Activated CD8-positive, alpha-beta T cell treated with anti-CD3 and anti-CD28 coated beads, Interleukin-2, amount 10 ng/mL, durations not matched to agents 7 days and 5 days (primary cell): ENCODE measurements at regions of chr4 and their contacts with region 1.

Region 1: DNA sequence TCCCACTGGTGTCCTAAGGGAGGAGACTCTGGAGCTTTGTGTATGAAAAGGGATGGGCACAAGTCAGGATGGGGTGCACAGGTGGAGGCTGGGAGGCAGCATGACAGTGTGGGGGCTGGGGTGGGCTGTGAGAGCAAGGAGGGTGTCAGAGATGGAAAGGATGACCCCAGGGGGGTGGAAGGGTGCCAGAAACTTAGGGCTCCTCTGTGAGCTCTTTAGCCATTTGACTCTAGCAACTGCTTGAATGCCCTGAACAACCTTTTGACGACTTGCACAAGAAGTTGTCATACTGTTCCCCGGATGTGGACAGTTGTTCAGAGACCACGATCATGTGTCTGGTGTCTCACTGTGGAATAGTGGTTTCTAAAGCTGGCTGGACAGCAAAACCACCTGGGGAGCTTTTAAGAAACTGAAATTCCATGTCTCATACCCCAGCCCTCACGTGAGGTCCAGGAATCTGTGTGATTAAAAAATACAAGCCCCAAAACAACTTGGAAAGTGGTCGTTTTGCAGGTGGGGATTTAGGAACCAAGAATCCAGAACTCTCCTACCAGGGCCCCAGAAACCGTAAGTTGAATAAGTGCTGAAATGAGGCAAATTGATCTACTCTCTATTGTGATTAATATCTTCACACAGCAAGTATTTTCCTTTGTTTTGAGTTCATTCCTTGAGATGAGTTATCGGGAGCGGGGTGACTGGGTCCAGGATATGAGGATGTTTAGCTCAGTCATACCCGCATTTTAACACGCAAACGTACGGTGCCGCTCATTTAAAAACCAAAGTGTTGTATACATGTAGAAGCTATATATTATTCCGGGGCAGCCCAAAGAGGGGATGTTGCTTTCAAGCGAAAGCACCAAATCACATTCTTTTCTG is 3.4 kb downstream of the RHOH start:
- DNase-seq: peak; percentile 90
- ATAC-seq: peak; percentile 45
- H3K4me3 Mint-ChIP-seq: peak overlapping the region; percentile 93
- H3K27ac Mint-ChIP-seq: peak overlapping the region; percentile 96
- H3K4me1 Mint-ChIP-seq: peaks cover 37% of the 10 kb centered on the region
- H3K27me3 Mint-ChIP-seq: no peaks in the 10 kb centered on the region

Region 2: DNA sequence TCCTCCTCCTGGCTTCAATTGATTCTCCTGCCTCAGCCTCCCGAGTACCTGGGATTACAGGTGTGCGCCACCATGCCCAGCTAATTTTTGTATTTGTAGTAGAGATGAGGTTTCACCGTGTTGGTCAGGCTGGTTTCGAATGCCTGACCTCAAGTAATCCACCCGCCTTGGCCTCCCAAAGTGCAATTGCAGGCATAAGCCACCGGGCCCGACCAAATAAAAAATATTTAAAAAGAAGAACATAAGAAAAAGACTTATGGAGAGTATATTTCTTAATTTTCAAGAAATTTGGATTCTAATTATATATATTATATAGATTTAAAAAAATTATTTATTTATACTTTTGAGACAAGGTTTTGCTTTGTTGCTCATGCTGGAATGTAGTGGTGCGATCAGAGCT is 113.8 kb before region 1 on chr4:
- CTCF ChIA-PET with region 1: no interaction called
- POLR2A ChIA-PET with region 1: no interaction called
- DNase-seq: no peak
- ATAC-seq: no peak
- H3K4me3 Mint-ChIP-seq: no peak overlapping the region
- H3K27ac Mint-ChIP-seq: no peak overlapping the region
- H3K4me1 Mint-ChIP-seq: peaks cover 2% of the 10 kb centered on the region
- H3K27me3 Mint-ChIP-seq: no peaks in the 10 kb centered on the region

Region 3: DNA sequence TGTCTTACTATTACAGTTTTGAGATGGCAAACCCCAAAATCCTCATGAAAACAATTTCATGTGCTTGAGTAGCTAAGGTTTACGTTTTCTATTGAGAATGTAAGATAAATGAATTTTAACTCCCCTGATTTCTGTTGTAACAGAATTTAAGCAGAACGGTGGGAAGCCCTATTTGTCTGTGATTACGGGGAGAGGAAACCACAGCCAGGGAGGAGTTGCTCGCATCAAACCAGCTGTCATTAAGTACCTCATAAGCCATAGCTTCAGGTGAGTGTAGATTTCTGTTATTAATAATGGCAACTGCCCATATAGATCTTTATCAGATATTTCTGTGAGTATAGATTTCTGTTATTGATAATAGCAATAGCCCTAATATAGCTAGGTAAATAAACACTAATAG is 47.6 kb before region 1 on chr4:
- CTCF ChIA-PET with region 1: interaction called, 5 read pairs
- POLR2A ChIA-PET with region 1: interaction called, 20 read pairs
- DNase-seq: no peak
- ATAC-seq: peak; percentile 48
- H3K4me3 Mint-ChIP-seq: peak overlapping the region; percentile 10
- H3K27ac Mint-ChIP-seq: no peak overlapping the region
- H3K4me1 Mint-ChIP-seq: peaks cover 28% of the 10 kb centered on the region
- H3K27me3 Mint-ChIP-seq: no peaks in the 10 kb centered on the region

Region 4: GRCh38 chr4:40212674-40213527 is 12.7 kb after region 1 on chr4:
- CTCF ChIA-PET with region 1: interaction called, 12 read pairs
- POLR2A ChIA-PET with region 1: interaction called, 517 read pairs
- DNase-seq: peak; percentile 33
- ATAC-seq: peak; percentile 25
- H3K4me3 Mint-ChIP-seq: peak overlapping the region; percentile 68
- H3K27ac Mint-ChIP-seq: peak overlapping the region; percentile 86
- H3K4me1 Mint-ChIP-seq: peaks cover 90% of the 10 kb centered on the region
- H3K27me3 Mint-ChIP-seq: no peaks in the 10 kb centered on the region

Region 5: GRCh38 chr4:40238700-40239548 is 38.7 kb after region 1 on chr4:
- CTCF ChIA-PET with region 1: interaction called, 7 read pairs
- POLR2A ChIA-PET with region 1: interaction called, 20 read pairs
- DNase-seq: peak; percentile 92
- ATAC-seq: peak; percentile 91
- H3K4me3 Mint-ChIP-seq: peak overlapping the region; percentile 71
- H3K27ac Mint-ChIP-seq: peak overlapping the region; percentile 96
- H3K4me1 Mint-ChIP-seq: peaks cover 89% of the 10 kb centered on the region
- H3K27me3 Mint-ChIP-seq: no peaks in the 10 kb centered on the region

Region 6: GRCh38 chr4:40731792-40732245 is 531.6 kb after region 1 on chr4:
- CTCF ChIA-PET with region 1: no interaction called
- POLR2A ChIA-PET with region 1: no interaction called
- DNase-seq: peak; percentile 28
- ATAC-seq: peak; percentile 62
- H3K4me3 Mint-ChIP-seq: peak overlapping the region; percentile 4
- H3K27ac Mint-ChIP-seq: peak overlapping the region; percentile 44
- H3K4me1 Mint-ChIP-seq: peaks cover 41% of the 10 kb centered on the region
- H3K27me3 Mint-ChIP-seq: peaks cover 2% of the 10 kb centered on the region